Upper lobe of right lung (tissue), 1 donor: ENCODE measurements at regions of chr17 and their contacts with region 1.

Region 1: DNA sequence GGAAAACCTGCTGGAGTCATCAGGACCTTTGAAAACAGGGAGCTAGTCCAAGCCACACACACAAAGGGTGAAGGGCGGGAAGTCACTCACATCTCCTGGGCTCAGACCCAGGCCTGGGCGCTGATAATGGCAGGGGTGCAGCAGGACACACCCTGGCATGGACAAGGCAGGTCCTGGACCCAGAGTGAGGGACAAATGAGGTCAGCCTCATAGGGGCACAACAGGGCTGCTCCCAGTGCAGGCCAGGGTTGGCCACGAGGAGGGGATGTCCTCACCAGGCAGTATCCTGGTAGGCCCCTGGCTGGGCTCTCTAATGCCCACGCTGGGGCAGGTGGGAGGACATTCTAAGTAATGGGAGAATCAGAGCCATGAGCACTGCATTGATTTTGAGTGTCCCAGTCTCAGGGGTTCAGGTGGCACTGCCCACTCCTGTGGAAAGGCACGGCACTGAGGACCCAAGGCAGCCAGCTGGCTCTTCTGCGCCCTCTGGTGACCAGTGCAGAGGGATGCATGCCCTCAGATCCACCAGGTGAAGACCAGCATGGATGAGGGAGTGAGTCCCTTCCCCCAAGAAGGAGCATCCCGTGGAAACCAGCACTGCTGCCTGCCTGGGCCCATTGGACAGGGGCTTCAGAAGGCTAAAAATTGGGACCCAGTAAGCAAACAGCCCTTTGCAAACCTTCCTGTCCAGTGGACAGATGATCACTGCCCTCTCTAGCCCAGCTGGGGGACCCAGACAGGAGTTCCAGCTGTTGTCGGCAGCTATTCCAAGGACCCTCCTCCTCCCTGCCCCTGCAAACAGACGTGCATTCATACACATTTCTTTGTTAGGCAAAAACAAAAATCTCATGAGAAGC is 23.4 kb upstream of the SREBF1 start:
- DNase-seq: peak; percentile 86
- ATAC-seq: peak; percentile 95
- H3K4me3 ChIP-seq: no peak overlapping the region
- H3K27ac ChIP-seq: no peak overlapping the region
- H3K4me1 ChIP-seq: peaks cover 5% of the 10 kb centered on the region
- H3K27me3 ChIP-seq: no peaks in the 10 kb centered on the region
- CTCF ChIP-seq: peak; percentile 96

Region 2: GRCh38 chr17:17668775-17669579 is 191.2 kb before region 1 on chr17:
- intact Hi-C with region 1: no loop called
- DNase-seq: no peak
- ATAC-seq: no peak
- H3K4me3 ChIP-seq: no peak overlapping the region
- H3K27ac ChIP-seq: no peak overlapping the region
- H3K4me1 ChIP-seq: peaks cover 4% of the 10 kb centered on the region
- H3K27me3 ChIP-seq: no peaks in the 10 kb centered on the region
- CTCF ChIP-seq: no peak

Region 3: DNA sequence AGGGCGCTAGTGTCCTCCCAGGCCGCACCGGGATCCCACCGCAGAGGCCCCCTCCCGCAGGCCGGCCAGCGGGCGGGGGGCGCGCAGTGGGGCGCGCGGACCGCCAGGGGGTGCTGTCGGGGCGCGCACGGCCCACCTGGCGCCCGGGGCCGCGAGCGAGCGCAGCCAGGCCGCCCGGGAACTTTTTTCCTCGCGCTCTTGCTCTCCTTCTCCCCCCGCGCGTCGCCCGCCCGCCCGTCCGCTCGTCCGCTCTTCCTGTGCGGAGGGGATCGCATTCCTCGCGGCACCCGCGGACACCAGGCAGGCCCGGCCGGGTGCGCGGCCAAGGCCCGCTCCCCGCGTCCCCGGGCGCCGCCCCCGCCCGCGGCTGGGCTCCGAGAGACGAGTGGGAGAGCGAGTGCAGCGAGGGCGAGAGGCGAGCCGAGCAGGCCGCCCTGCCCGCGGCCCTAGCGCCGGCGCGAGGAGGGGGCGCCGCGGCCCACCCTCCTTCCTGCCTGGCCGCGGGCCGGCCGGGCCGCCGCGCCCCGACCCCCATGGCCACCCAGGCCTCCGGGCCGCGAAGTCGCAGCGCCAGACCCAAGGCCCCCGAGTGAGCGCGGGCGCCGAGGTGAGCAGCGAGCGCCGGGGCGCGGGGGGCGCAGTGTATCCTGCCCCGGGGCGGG is 178.8 kb before region 1 on chr17 and contains the start of gene RAI1:
- intact Hi-C with region 1: loop called (anchors 10 kb)
- DNase-seq: peak; percentile 91
- ATAC-seq: peak; percentile 85
- H3K4me3 ChIP-seq: peak within 1 kb of the TSS; percentile 70
- H3K27ac ChIP-seq: peak within 1 kb of the TSS; percentile 91
- H3K4me1 ChIP-seq: peaks cover 29% of the 10 kb centered on the region
- H3K27me3 ChIP-seq: no peaks in the 10 kb centered on the region
- CTCF ChIP-seq: peak; percentile 55
- total RNA-seq, gene RAI1: 38.1 TPM

Region 4: GRCh38 chr17:17812211-17813057 is 47.7 kb before region 1 on chr17:
- intact Hi-C with region 1: loop called (anchors 5 kb)
- DNase-seq: peak; percentile 86
- ATAC-seq: peak; percentile 83
- H3K4me3 ChIP-seq: no peak overlapping the region
- H3K27ac ChIP-seq: peak overlapping the region; percentile 42
- H3K4me1 ChIP-seq: peaks cover 5% of the 10 kb centered on the region
- H3K27me3 ChIP-seq: no peaks in the 10 kb centered on the region
- CTCF ChIP-seq: peak; percentile 100

Region 5: GRCh38 chr17:18004884-18005305 is 144.8 kb after region 1 on chr17:
- intact Hi-C with region 1: no loop called
- DNase-seq: no peak
- ATAC-seq: no peak
- H3K4me3 ChIP-seq: no peak overlapping the region
- H3K27ac ChIP-seq: no peak overlapping the region
- H3K4me1 ChIP-seq: no peaks in the 10 kb centered on the region
- H3K27me3 ChIP-seq: no peaks in the 10 kb centered on the region
- CTCF ChIP-seq: no peak